ENCODE measurements at regions of chr9 and their contacts with region 1.

Region 1: GRCh38 chr9:68905129-68905528 is 108.8 kb downstream of the PRKACG start:
- DNase-seq: no peak
- ATAC-seq: no peak
- H3K4me3 ChIP-seq: no peak overlapping the region
- H3K27ac ChIP-seq: no peak overlapping the region
- H3K4me1 ChIP-seq: peaks cover 0 to 24% (median 0%) of the 10 kb centered on the region in 12 donors
- H3K27me3 ChIP-seq: no peaks in the 10 kb centered on the region
- CTCF ChIP-seq: no peak
- POLR2A ChIP-seq: no peak

Region 2: DNA sequence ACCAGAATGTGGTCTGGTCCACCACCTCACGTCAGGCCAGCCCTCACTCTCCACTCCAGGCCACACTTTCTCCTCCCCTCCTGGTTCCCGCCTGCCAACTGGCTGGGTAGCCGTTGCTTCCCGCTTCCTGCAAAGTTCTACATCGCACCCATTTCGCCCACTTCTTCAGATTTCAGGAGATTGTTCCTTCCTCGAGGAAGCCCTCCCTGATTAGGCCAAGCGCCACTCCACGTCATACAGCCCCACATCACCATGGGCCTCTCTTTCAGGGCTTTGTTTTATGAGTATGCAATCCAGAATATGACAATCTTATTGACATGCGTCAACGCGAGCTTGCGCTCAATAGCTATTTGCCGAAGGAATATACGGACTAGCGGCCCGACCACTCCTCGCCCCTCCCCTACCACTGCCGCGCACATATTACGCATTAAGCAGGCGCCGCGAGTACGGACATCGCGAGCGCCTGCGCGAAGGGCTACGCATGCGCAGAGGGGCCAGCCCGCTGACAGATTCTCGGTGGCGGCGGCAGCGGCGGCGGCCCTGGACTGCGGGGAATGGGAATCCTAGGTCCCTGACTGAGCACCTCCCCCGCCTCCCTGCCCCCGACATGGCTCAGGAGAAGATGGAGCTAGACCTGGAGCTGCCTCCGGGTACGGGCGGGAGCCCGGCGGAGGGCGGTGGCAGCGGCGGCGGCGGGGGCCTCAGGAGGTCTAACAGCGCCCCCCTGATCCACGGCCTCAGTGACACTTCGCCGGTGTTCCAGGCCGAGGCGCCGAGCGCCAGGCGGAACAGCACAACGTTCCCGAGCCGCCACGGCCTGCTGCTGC is 125.4 kb before region 1 on chr9:
- intact Hi-C with region 1: no loop called
- DNase-seq: peak; percentile 95 to 98 (median 97)
- ATAC-seq: peak; percentile 88 to 95 (median 94)
- H3K4me3 ChIP-seq: peak overlapping the region; percentile 49 to 89 (median 74)
- H3K27ac ChIP-seq: peak overlapping the region; percentile 83 to 97 (median 94)
- H3K4me1 ChIP-seq: peaks cover 8 to 77% (median 60%) of the 10 kb centered on the region in 12 donors
- H3K27me3 ChIP-seq: no peaks in the 10 kb centered on the region
- CTCF ChIP-seq: peak in 9 of 12 donors; percentile 28 to 67 (median 43)
- POLR2A ChIP-seq: peak; percentile 43 to 93

Region 3: DNA sequence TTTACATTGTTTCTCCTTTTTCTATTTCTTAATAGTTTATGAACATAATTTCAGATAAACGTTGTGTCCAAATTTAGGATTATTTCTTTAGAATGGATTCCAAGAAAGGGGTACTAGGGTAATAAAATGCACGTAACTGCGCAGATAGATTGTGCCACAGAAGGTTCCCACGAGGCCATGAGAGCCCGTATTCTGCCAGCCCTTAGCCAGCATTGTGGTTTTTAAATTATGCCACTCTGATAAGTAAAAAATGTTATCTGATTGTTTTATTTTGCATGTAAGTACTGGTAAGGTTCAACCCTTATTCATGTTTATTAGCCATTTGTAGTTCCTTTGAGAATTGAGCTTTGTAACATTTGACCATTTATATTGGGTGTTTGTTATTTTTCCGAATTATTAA is 20.0 kb after region 1 on chr9:
- intact Hi-C with region 1: loop called in 1 of 10 experiments (anchors 2 kb)
- DNase-seq: no peak
- ATAC-seq: no peak
- H3K4me3 ChIP-seq: no peak overlapping the region
- H3K27ac ChIP-seq: no peak overlapping the region
- H3K4me1 ChIP-seq: no peaks in the 10 kb centered on the region
- H3K27me3 ChIP-seq: no peaks in the 10 kb centered on the region
- CTCF ChIP-seq: no peak
- POLR2A ChIP-seq: no peak

Measured in heart left ventricle (tissue), 16 donors.